Panc1 (cell line): ENCODE measurements at regions of chr12 and their contacts with region 1.

Region 1: DNA sequence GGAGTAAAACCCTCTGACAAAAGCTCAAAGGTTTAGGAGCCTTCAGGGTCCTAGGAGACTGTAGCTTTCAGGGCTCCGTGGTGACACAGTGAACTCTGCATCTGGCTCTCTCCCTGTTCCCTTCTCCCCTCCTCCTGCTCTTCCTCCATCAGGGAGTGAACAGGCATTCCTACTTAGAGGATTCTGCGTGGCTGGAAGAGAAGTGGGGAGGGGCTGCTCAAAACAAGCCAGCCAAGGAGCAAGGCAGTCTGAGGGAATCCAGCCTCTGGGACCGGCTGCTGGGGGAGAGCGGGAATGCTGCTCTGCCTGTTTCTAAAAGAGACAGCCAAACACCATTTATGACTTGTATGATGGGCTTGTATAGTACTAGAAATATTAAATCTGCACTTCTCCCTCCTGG is 49.5 kb downstream of the RBMS2 start:
- DNase-seq: no peak
- ATAC-seq: no peak
- H3K4me3 ChIP-seq: no peak overlapping the region
- H3K27ac ChIP-seq: no peak overlapping the region
- H3K4me1 ChIP-seq: no peaks in the 10 kb centered on the region
- H3K27me3 ChIP-seq: no peaks in the 10 kb centered on the region
- CTCF ChIP-seq: no peak

Region 2: GRCh38 chr12:55940065-55940732 is 630.9 kb before region 1 on chr12:
- CTCF ChIA-PET with region 1: no interaction called
- POLR2A ChIA-PET with region 1: no interaction called
- in situ Hi-C with region 1: no loop called
- intact Hi-C with region 1: no loop called
- DNase-seq: peak; percentile 81
- ATAC-seq: peak; percentile 99
- H3K4me3 ChIP-seq: peak overlapping the region; percentile 19 to 48
- H3K27ac ChIP-seq: 0 out of 2 replicates have a peak overlapping the region, but pooled peaks have one; percentile 31
- H3K4me1 ChIP-seq: peaks cover 4% of the 10 kb centered on the region; the same call in 1 of the 2 replicates
- H3K27me3 ChIP-seq: no peaks in the 10 kb centered on the region
- CTCF ChIP-seq: peak; percentile 96

Region 3: DNA sequence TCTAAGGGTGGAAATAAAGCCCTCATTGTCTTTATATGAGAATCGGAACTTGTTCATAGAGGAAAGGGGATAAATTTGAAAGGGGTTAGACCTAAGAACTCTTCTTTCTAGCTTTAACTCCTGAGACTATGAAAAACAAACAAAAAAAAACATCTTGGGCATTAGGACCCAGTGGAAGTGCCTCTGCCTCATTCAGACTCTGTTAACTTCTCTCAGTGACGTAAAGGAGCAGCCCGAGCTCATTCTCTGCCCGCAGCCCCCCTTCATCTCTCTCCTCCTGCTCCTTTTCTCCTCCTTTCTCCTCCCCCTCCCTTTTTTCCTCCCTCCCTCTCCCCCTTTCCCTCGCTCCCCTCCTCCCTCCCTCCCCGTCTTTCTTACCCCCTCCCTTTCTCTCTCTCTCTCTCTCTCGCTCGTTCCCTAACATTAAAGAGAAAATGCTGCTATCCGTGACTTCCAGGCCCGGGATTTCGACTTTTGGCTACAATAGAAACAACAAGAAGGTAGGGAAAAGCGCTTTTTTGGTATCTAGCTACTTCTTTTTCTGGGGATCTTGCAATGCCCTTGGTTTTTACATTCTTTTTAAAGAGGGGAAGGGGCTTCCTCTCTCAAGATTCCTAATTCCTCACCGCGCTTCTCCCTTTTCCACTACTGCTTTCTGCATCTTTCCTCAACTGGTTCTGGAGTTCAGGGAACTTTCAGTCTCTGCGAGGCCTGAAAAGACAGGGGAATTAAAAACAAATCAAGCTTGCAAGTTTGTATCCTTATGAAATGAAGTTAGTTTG is 49.3 kb before region 1 on chr12 and contains the start of gene RBMS2:
- CTCF ChIA-PET with region 1: no interaction called
- POLR2A ChIA-PET with region 1: no interaction called
- in situ Hi-C with region 1: no loop called
- intact Hi-C with region 1: loop called (anchors 2 kb)
- DNase-seq: no peak
- ATAC-seq: peak; percentile 90
- H3K4me3 ChIP-seq: peak within 1 kb of the TSS; percentile 55 to 77
- H3K27ac ChIP-seq: peak within 1 kb of the TSS; percentile 83
- H3K4me1 ChIP-seq: peaks cover 10% of the 10 kb centered on the region; the same call in 1 of the 2 replicates
- H3K27me3 ChIP-seq: no peaks in the 10 kb centered on the region
- CTCF ChIP-seq: no peak
- total RNA-seq, gene RBMS2: 18.2 TPM

Region 4: DNA sequence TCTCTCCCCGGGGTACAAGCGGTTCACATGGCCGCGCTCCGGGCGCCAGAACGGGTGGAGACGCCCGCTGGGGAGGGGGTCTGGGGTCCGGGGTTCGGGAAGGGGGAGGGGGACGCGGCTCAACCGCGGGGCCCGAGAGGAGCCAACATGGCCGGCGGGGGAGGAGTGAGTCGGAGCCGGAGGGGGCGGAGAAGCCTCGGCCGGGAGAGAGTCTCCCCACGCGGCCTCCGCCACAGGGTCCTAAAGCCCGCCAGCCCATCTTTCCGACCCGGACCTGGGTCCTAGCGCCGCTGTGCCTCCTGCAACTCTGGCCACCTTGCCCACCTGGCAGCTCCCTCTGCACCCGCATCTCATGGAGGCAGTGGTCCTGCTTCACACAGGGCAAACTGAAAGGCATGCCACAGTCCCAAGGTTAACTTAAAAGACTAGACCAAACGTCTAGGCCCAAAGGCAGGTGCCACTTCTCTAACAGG is 59.1 kb after region 1 on chr12 and contains the start of gene BAZ2A:
- CTCF ChIA-PET with region 1: no interaction called
- POLR2A ChIA-PET with region 1: no interaction called
- in situ Hi-C with region 1: loop called (anchors 10 kb)
- intact Hi-C with region 1: no loop called
- DNase-seq: no peak
- ATAC-seq: peak; percentile 82
- H3K4me3 ChIP-seq: peak within 1 kb of the TSS; percentile 96 to 99
- H3K27ac ChIP-seq: peak within 1 kb of the TSS; percentile 96
- H3K4me1 ChIP-seq: peaks cover 41% of the 10 kb centered on the region
- H3K27me3 ChIP-seq: no peaks in the 10 kb centered on the region
- CTCF ChIP-seq: no peak
- total RNA-seq, gene BAZ2A: 131 TPM